Common myeloid progenitor, CD34-positive (primary cell): ENCODE measurements at regions of chr17 and their contacts with region 1.

Region 1: GRCh38 chr17:44775136-44775837 is 16.5 kb downstream of the ADAM11 start:
- DNase-seq: peak; percentile 97 to 98 (median 98)
- H3K4me3 ChIP-seq: peak overlapping the region; percentile 42 to 78 (median 65)
- H3K27ac ChIP-seq: no peak overlapping the region
- H3K4me1 ChIP-seq: peaks cover 0 to 41% (median 35%) of the 10 kb centered on the region in 4 experiments
- H3K27me3 ChIP-seq: peaks cover 0 to 11% (median 2%) of the 10 kb centered on the region in 5 experiments

Region 2: GRCh38 chr17:44672479-44673093 is 102.7 kb before region 1 on chr17:
- CTCF ChIA-PET with region 1: no interaction called
- POLR2A ChIA-PET with region 1: no interaction called
- DNase-seq: peak in 2 of 3 donors; percentile 38 to 51
- H3K4me3 ChIP-seq: no peak overlapping the region
- H3K27ac ChIP-seq: no peak overlapping the region
- H3K4me1 ChIP-seq: no peaks in the 10 kb centered on the region
- H3K27me3 ChIP-seq: peaks cover 0 to 2% (median 0%) of the 10 kb centered on the region in 5 experiments

Region 3: GRCh38 chr17:44708401-44709181 is 66.7 kb before region 1 on chr17 and contains the start of gene DBF4B:
- CTCF ChIA-PET with region 1: no interaction called
- POLR2A ChIA-PET with region 1: no interaction called
- DNase-seq: peak; percentile 90 to 95 (median 93)
- H3K4me3 ChIP-seq: peak within 1 kb of the TSS; percentile 79 to 99 (median 95)
- H3K27ac ChIP-seq: peak within 1 kb of the TSS; percentile 80 to 88
- H3K4me1 ChIP-seq: peaks cover 13 to 19% (median 16%) of the 10 kb centered on the region in 4 experiments
- H3K27me3 ChIP-seq: no peaks in the 10 kb centered on the region

Region 4: DNA sequence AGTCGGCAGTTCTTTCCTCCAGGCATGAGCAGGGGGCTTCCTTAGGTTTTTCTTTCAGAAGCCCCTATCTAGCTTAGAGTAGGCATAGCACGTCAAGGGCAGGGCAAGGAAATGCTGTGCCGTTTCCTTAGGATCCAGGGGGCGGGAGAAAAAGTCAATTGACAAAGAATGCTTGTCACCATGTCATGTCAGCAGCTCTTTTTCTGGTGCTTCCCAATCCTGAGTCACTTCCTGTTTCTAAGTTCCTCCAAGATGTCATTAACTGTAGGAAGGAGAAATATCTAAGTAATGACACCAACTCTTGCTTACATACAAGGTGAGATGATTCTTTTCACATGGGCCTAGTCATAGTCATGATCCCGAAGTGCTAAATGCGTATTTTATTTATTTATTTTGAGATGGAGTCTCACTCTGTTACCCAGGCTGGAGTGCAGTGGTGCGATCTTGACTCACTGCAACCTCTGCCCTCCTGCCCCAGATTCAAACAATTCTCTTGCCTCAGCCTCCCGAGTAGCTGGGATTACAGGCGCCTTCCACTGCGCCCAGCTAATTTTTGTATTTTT is 19.6 kb after region 1 on chr17:
- CTCF ChIA-PET with region 1: interaction called, 23 read pairs
- POLR2A ChIA-PET with region 1: interaction called, 3 read pairs
- DNase-seq: peak; percentile 41 to 51 (median 43)
- H3K4me3 ChIP-seq: no peak overlapping the region
- H3K27ac ChIP-seq: no peak overlapping the region
- H3K4me1 ChIP-seq: peaks cover 0 to 15% (median 6%) of the 10 kb centered on the region in 4 experiments
- H3K27me3 ChIP-seq: no peaks in the 10 kb centered on the region

Region 5: DNA sequence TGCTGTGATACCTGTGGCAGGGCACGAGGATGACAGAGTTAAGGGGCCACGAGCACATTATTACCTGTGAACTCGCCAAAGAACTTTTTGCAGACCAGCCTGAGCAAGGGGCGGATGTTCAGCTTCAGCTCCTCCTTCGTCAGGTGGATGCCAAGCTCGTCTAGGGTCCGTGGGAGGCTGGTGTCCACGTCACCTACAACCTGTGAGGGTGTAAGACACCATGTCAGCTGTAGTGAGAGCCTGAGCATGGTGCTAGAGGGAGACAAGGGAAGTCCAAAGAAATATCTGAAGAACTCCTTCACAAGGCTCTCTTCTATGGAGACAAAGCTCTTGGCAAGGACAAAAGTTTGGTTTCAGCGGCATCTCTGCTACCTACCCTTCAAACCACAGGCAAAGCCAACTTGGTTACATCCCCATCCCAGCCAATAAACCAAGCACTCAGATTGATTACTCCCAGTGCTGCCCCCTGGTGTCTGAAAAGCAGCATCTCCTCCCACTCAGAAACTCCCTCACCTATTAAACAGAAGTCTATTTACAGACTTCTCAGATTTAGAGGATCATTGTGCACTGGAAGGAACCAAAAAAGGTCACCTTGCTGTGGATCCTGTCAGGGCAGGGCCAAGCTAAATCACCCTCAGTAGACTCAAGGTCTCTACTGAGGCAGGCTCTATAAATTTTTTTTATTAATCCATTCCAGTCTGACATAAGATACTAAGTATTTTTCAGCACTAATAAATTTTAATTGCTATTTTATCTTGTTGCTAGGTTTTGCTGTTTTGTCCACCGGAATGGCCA is 89.8 kb after region 1 on chr17:
- CTCF ChIA-PET with region 1: interaction called, 192 read pairs
- POLR2A ChIA-PET with region 1: interaction called, 3 read pairs
- DNase-seq: peak; percentile 72 to 86 (median 78)
- H3K4me3 ChIP-seq: no peak overlapping the region
- H3K27ac ChIP-seq: no peak overlapping the region
- H3K4me1 ChIP-seq: no peaks in the 10 kb centered on the region
- H3K27me3 ChIP-seq: no peaks in the 10 kb centered on the region